Activated T-helper 1 cell treated with anti-CD3 and anti-CD28 coated beads, Interleukin-12 subunit alpha, Interleukin-12 subunit beta, Interleukin-2, Interleukin-4 antibody, amounts not matched to agents 30 ng/mL and 10 ng/mL and 1 ng/mL, durations not matched to agents 14 hours and 24 hours and 36 hours (primary cell): ENCODE measurements at regions of chr16 and their contacts with region 1.

Region 1: GRCh38 chr16:31354394-31355291 is at the start of gene ITGAX:
- DNase-seq: peak; percentile 76
- H3K4me3 Mint-ChIP-seq: peak within 1 kb of the TSS; percentile 84
- H3K27ac Mint-ChIP-seq: peak within 1 kb of the TSS; percentile 99
- H3K4me1 Mint-ChIP-seq: peaks cover 69% of the 10 kb centered on the region
- H3K27me3 Mint-ChIP-seq: no peaks in the 10 kb centered on the region
- total RNA-seq, gene ITGAX: 63.8 and 65.0 TPM in 2 replicates

Region 2: GRCh38 chr16:31073968-31074813 is 280.5 kb before region 1 on chr16 and contains the starts of genes ZNF646 and ZNF668:
- intact Hi-C with region 1: loop called (anchors 10 kb)
- DNase-seq: peak; percentile 98
- H3K4me3 Mint-ChIP-seq: peak within 1 kb of the TSS; percentile 99
- H3K27ac Mint-ChIP-seq: peak within 1 kb of the TSS; percentile 96
- H3K4me1 Mint-ChIP-seq: peaks cover 35% of the 10 kb centered on the region
- H3K27me3 Mint-ChIP-seq: no peaks in the 10 kb centered on the region
- total RNA-seq, gene ZNF646: 25.3 and 26.1 TPM in 2 replicates
- total RNA-seq, gene ZNF668: 14.9 and 15.1 TPM in 2 replicates

Region 3: DNA sequence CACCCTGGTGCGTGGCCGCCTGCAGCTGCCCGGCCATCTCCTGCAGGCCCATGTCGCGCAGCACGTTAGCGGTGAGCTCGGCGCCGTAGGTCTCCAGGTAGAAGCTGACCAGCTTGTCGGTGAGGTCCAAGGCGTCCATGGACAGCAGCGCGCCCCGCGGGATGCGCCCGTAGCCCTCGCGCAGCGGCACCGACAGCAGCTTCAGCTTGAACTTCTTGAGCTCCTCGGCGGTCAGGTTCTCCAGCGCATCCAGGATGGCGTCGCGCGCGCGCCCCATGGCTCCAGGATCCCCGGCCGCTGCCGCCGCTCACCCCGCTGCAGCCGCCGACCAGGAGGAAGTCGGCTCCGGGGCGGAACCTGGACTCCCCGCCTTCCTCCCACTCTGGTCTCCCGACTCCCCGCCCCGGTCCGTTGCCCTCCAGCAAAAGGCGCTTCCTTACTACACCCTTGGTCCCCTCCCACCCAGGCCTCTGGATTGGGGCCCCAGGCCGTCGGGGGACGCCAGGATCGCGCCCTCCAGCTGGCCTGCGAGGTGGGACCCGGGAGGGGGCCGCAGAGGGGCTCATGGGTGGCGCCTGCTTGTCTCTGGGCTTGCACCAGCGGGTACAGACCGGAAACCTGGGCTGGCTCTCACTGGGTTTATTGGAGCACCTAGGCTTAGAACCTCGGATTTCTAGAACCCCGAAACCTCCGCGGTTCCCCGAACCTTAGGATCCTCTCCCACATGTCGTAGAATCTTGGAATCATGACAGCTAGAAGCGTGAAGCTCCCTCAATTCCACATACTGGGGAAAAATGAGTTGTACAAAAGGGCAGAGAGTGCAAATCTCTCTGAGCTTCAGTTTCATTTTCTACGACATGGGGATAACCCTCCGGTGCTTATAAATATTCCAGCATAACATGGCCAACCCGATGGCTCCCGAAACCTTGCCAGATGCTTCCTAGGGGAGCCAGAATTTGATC is 151.9 kb before region 1 on chr16 and contains the start of gene PYCARD:
- intact Hi-C with region 1: loop called (anchors 5 kb)
- DNase-seq: no peak
- H3K4me3 Mint-ChIP-seq: peak within 1 kb of the TSS; percentile 85
- H3K27ac Mint-ChIP-seq: peak within 1 kb of the TSS; percentile 80
- H3K4me1 Mint-ChIP-seq: peaks cover 55% of the 10 kb centered on the region
- H3K27me3 Mint-ChIP-seq: peaks cover 5% of the 10 kb centered on the region
- total RNA-seq, gene PYCARD: 20.9 and 21.2 TPM in 2 replicates

Region 4: DNA sequence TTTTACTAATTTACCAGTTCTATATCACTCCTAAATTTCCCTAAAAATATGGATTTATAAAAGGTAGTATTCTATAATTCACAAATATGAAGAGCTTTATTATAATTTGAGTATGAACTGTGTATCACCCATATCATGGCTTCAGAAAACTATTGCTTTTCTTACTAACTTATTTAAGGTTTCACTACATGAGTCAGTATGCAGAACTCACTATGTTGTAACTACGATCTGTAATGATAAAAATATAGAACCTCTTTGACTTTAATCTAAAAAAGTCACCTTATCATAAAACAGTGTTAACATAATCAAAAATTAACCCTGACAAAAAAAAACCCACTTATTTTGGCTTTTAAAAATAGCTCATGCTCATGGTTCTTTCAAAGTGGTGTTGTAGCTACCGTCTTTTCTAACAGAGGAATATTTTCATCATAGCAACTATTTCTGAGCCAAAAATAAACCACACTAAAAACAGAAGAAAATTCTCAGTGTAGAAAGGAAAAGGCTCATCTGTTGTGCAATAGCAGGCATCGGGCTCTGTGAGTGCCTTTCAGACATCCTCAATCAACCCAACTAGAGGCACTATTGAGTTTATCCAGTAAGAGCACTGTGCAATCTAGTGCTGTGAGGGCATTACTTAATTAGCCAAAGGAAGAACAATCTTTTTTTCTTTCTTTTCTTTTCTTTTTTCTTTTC is 52.8 kb before region 1 on chr16:
- intact Hi-C with region 1: loop called (anchors 10 kb)
- DNase-seq: no peak
- H3K4me3 Mint-ChIP-seq: no peak overlapping the region
- H3K27ac Mint-ChIP-seq: no peak overlapping the region
- H3K4me1 Mint-ChIP-seq: peaks cover 14% of the 10 kb centered on the region
- H3K27me3 Mint-ChIP-seq: peaks cover 20% of the 10 kb centered on the region

Region 5: GRCh38 chr16:31382485-31383161 is 28.0 kb after region 1 on chr16:
- intact Hi-C with region 1: loop called (anchors 1 kb)
- DNase-seq: peak; percentile 60
- H3K4me3 Mint-ChIP-seq: no peak overlapping the region
- H3K27ac Mint-ChIP-seq: no peak overlapping the region
- H3K4me1 Mint-ChIP-seq: peaks cover 31% of the 10 kb centered on the region
- H3K27me3 Mint-ChIP-seq: peaks cover 3% of the 10 kb centered on the region